PC-3 (cell line): ENCODE measurements at regions of chr7 and their contacts with region 1.

Region 1: GRCh38 chr7:90455163-90456030 is 14.0 kb upstream of the PTTG1IP2 start:
- DNase-seq: peak; percentile 67
- ATAC-seq: peak; percentile 93
- H3K4me3 ChIP-seq: peak overlapping the region; percentile 52; the same call in 1 of the 2 replicates
- H3K27ac ChIP-seq: no peak overlapping the region
- H3K4me1 ChIP-seq: no peaks in the 10 kb centered on the region
- H3K27me3 ChIP-seq: no peaks in the 10 kb centered on the region
- CTCF ChIP-seq: peak; percentile 82

Region 2: DNA sequence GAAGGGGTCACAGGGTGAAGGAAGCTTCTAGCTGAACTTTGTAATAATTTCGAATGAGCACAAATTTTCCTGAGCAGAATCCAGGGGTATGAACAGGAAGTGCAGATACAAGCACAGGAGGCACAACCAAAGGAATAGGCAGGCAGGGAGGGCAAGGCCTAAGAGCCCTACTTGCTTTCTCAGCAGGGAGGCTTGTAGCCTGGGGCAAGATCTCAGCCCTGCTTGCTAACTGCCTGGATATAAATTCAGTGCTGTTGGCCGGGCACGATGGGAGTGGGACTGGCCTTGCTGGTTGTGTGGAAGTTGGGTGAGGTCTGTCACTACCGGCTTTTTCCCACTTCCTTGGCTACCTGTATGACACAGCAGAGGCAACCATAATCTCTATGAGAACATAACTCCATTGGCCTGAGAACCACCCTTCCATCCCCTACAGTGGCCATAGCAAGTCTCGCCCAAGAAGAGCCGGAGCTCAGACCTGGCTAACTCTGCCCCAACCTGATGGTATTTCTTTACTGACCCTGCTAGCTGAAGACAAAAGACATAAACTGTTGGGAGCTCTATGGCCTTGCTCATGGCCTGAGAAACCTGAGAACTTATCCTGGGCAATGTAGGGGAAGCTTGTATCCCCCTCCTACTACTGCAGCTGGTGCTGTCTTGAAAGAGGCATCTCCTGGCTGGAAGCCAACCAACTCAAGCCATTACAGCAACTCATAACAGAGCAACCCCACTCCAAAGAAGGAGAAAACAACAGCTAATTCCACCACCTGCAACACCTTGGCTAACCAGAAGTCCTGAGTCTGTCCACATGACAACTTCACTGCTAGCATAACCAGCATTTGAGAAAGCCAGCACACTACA is 24.6 kb before region 1 on chr7:
- CTCF ChIA-PET with region 1: no interaction called
- POLR2A ChIA-PET with region 1: no interaction called
- intact Hi-C with region 1: no loop called
- DNase-seq: no peak
- ATAC-seq: no peak
- H3K4me3 ChIP-seq: no peak overlapping the region
- H3K27ac ChIP-seq: no peak overlapping the region
- H3K4me1 ChIP-seq: peaks cover 2% of the 10 kb centered on the region
- H3K27me3 ChIP-seq: no peaks in the 10 kb centered on the region
- CTCF ChIP-seq: no peak

Region 3: GRCh38 chr7:90516257-90516656 is 60.9 kb after region 1 on chr7:
- CTCF ChIA-PET with region 1: interaction called, 4 read pairs
- POLR2A ChIA-PET with region 1: no interaction called
- intact Hi-C with region 1: loop called (anchors 5 kb)
- DNase-seq: no peak
- ATAC-seq: no peak
- H3K4me3 ChIP-seq: no peak overlapping the region
- H3K27ac ChIP-seq: no peak overlapping the region
- H3K4me1 ChIP-seq: peaks cover 8% of the 10 kb centered on the region
- H3K27me3 ChIP-seq: no peaks in the 10 kb centered on the region
- CTCF ChIP-seq: no peak

Region 4: GRCh38 chr7:90552521-90552920 is 97.1 kb after region 1 on chr7:
- CTCF ChIA-PET with region 1: interaction called, 4 read pairs
- POLR2A ChIA-PET with region 1: no interaction called
- intact Hi-C with region 1: loop called (anchors 2 kb)
- DNase-seq: peak; percentile 61
- ATAC-seq: peak; percentile 79
- H3K4me3 ChIP-seq: no peak overlapping the region
- H3K27ac ChIP-seq: no peak overlapping the region
- H3K4me1 ChIP-seq: peaks cover 6% of the 10 kb centered on the region; the same call in 1 of the 2 replicates
- H3K27me3 ChIP-seq: no peaks in the 10 kb centered on the region
- CTCF ChIP-seq: peak; percentile 53; the same call in 1 of the 2 replicates

Region 5: GRCh38 chr7:90629297-90629918 is 174.0 kb after region 1 on chr7:
- CTCF ChIA-PET with region 1: interaction called, 6 read pairs
- POLR2A ChIA-PET with region 1: no interaction called
- intact Hi-C with region 1: loop called (anchors 1 kb)
- DNase-seq: peak; percentile 80
- ATAC-seq: peak; percentile 84
- H3K4me3 ChIP-seq: no peak overlapping the region
- H3K27ac ChIP-seq: no peak overlapping the region
- H3K4me1 ChIP-seq: peaks cover 19% of the 10 kb centered on the region
- H3K27me3 ChIP-seq: no peaks in the 10 kb centered on the region
- CTCF ChIP-seq: peak; percentile 80

Region 6: DNA sequence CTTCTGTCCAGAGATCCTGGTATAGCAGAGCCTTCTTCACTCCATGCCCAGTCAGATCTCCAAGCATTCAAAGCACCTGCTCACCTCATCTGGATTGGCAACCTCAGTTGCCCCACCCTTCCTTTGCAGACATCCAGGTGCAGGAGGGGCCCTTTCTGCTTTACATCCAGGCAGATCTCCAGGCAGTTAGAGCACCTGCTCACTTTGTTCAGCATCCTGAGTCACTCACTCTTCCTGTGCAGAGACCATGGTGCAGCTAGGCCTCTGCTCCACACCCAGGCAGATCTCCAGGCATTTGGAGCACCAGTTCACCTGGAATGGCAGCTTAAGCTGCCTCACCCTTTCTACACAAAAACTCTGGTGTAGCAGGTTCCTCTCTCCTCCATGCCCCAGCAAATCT is 293.9 kb after region 1 on chr7:
- CTCF ChIA-PET with region 1: no interaction called
- POLR2A ChIA-PET with region 1: no interaction called
- intact Hi-C with region 1: loop called (anchors 10 kb)
- DNase-seq: peak; percentile 51
- ATAC-seq: peak; percentile 81
- H3K4me3 ChIP-seq: no peak overlapping the region
- H3K27ac ChIP-seq: no peak overlapping the region
- H3K4me1 ChIP-seq: 0 out of 2 replicates have a peak, but pooled peaks cover 5% of the 10 kb centered on the region
- H3K27me3 ChIP-seq: no peaks in the 10 kb centered on the region
- CTCF ChIP-seq: no peak

Region 7: DNA sequence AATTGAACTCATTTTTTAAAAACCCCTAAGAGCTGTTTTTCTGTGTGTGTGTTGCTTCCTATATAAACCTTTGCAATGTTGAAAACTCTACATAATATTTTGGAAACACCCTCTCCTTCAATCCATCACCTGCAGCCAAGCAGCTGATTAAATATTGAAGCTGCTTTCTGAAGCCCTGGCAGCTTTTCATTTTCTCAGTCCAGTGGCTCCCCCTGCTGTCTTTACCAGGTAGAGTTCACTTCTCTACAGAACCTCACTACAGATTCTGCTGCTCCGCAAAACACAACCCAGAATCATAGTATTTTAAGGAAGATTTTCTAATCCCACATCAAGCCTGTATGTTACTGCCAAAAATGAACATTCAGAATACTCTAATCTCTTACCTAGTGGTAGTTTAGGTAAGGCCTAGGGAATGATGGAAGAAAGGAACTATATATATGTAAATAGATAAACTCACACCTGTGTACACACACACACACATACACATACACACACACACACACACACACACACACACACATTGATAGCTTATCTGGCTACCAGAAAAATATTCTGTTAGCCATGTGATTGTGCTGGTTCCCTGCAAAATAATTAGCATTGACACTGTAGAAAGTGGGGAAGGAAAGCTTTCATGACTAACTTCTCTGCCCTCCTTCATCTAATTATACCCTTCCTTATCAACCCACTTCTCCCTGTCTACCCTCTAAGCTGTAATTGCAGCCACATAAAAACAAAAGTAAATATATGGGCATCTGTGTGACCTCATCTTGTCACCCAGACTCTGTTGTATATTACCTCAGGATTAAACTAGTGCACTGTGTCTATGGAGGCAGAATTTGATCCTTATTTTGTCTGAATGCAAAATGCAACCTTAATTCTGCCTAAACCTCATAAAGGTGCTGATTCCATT is 579.3 kb after region 1 on chr7:
- CTCF ChIA-PET with region 1: interaction called, 6 read pairs
- POLR2A ChIA-PET with region 1: no interaction called
- intact Hi-C with region 1: loop called (anchors 1 kb)
- DNase-seq: peak; percentile 65
- ATAC-seq: peak; percentile 63
- H3K4me3 ChIP-seq: no peak overlapping the region
- H3K27ac ChIP-seq: no peak overlapping the region
- H3K4me1 ChIP-seq: no peaks in the 10 kb centered on the region
- H3K27me3 ChIP-seq: no peaks in the 10 kb centered on the region
- CTCF ChIP-seq: peak; percentile 81